Heart right ventricle (tissue), 16 donors: ENCODE measurements at regions of chr19 and their contacts with region 1.

Region 1: GRCh38 chr19:51026554-51026831 is at the start of gene KLK11:
- DNase-seq: no peak
- ATAC-seq: peak in 2 of 8 donors; percentile 32 to 41
- H3K4me3 ChIP-seq: peak within 1 kb of the TSS in 6 of 10 donors; percentile 7 to 41 (median 13)
- H3K27ac ChIP-seq: peak within 1 kb of the TSS in 3 of 10 donors; percentile 23 to 44 (median 42)
- H3K4me1 ChIP-seq: peaks cover 0 to 16% (median 0%) of the 10 kb centered on the region in 9 donors
- H3K27me3 ChIP-seq: peaks cover 0 to 80% (median 43%) of the 10 kb centered on the region in 7 donors
- CTCF ChIP-seq: no peak
- total RNA-seq, gene KLK11: 0.27 to 0.46 (median 0.36) TPM in 4 of 10 donors, not detected in the others

Region 2: DNA sequence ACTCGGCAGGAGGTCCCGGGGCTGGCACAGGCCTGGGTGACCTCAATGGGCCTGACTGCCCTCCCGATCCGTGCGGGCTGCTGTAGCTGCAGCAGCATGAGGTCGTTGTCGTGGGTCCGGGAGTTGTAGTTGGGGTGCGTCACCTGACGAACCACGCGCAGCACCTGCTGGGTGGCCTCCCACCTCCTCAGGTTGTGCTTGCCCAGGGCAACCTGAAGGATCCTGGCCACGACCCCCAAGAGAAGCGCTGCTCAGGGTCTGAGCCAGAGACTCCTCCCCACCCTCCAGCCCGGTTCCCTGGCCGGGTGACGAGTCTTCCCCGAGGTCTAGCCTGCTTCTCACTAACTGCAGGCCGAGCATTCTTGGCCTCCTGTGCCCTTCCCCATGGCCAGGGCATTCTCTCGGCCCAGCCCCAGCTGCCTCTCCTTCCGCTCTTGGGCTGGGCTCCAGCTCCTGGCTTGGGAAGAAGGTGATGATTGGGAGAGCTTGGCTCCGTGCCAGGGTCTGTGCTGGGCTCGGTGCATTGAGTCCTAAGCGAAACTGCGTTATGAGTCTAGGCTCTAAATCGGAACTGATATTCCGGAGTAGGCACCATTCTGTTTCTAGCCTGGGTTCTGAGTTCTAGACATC is 53.1 kb after region 1 on chr19:
- intact Hi-C with region 1: loop called in 1 of 10 experiments (anchors 5 kb)
- DNase-seq: peak; percentile 57 to 77
- ATAC-seq: peak; percentile 57 to 91 (median 82)
- H3K4me3 ChIP-seq: no peak overlapping the region
- H3K27ac ChIP-seq: peak overlapping the region in 1 of 10 donors; percentile 45
- H3K4me1 ChIP-seq: peaks cover 0 to 7% (median 3%) of the 10 kb centered on the region in 9 donors
- H3K27me3 ChIP-seq: peaks cover 0 to 7% (median 0%) of the 10 kb centered on the region in 7 donors
- CTCF ChIP-seq: no peak

Region 3: DNA sequence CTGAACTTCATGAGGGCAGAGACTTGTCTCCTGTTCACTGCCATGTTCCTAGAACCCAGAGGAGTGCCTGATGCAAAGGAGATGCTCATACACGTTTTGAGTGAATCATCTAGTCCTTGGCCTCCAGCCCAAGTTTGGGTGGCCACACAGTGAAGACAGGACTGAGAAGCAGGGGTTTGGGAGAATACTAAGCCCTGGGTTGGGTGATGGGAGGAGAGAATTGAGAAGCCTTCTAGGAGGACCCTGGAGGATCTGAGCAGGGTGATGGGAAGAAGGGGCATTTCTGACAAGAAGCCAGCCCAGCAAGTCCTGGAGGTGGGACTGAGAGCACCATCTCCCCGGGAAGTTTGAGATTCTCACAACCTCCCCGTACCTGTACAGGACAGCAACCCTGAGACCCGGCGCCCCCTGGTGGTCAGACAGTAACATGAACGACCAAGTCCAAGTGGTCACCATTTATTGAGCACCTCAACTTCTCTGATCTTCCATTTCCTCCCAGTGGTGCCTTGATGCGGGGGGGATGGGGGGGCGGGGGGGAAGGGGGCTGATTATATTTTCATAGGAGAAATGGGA is 70.8 kb after region 1 on chr19:
- intact Hi-C with region 1: loop called in 9 of 10 experiments (anchors 1 to 5 kb)
- DNase-seq: peak; percentile 62 to 77
- ATAC-seq: peak in 7 of 8 donors; percentile 32 to 77 (median 63)
- H3K4me3 ChIP-seq: no peak overlapping the region
- H3K27ac ChIP-seq: no peak overlapping the region
- H3K4me1 ChIP-seq: peaks cover 0 to 30% (median 10%) of the 10 kb centered on the region in 9 donors
- H3K27me3 ChIP-seq: no peaks in the 10 kb centered on the region
- CTCF ChIP-seq: peak; percentile 23 to 69 (median 61)

Region 4: GRCh38 chr19:51142119-51142518 is 115.6 kb after region 1 on chr19 and contains the start of gene SIGLEC7:
- intact Hi-C with region 1: no loop called
- DNase-seq: peak; percentile 29 to 52
- ATAC-seq: peak; percentile 26 to 58 (median 52)
- H3K4me3 ChIP-seq: peak within 1 kb of the TSS in 1 of 10 donors; percentile 24
- H3K27ac ChIP-seq: peak within 1 kb of the TSS in 3 of 10 donors; percentile 14 to 93 (median 48)
- H3K4me1 ChIP-seq: peaks cover 0 to 72% (median 0%) of the 10 kb centered on the region in 9 donors
- H3K27me3 ChIP-seq: peaks cover 0 to 51% (median 11%) of the 10 kb centered on the region in 7 donors
- CTCF ChIP-seq: no peak
- total RNA-seq, gene SIGLEC7: 0.15 to 2.9 (median 0.56) TPM in 8 of 10 donors, not detected in the others